Panc1 (cell line): ENCODE measurements at regions of chr19 and their contacts with region 1.

Region 1: GRCh38 chr19:39110263-39110967 is 15.2 kb upstream of the PAK4 start:
- DNase-seq: peak; percentile 75
- ATAC-seq: peak; percentile 83
- H3K4me3 ChIP-seq: no peak overlapping the region
- H3K27ac ChIP-seq: peak overlapping the region; percentile 24; the same call in 1 of the 2 replicates
- H3K4me1 ChIP-seq: peaks cover 16% of the 10 kb centered on the region
- H3K27me3 ChIP-seq: no peaks in the 10 kb centered on the region
- CTCF ChIP-seq: peak; percentile 100

Region 2: GRCh38 chr19:39021063-39021462 is 89.4 kb before region 1 on chr19:
- CTCF ChIA-PET with region 1: no interaction called
- POLR2A ChIA-PET with region 1: no interaction called
- in situ Hi-C with region 1: no loop called
- intact Hi-C with region 1: no loop called
- DNase-seq: no peak
- ATAC-seq: no peak
- H3K4me3 ChIP-seq: no peak overlapping the region
- H3K27ac ChIP-seq: no peak overlapping the region
- H3K4me1 ChIP-seq: no peaks in the 10 kb centered on the region
- H3K27me3 ChIP-seq: no peaks in the 10 kb centered on the region
- CTCF ChIP-seq: no peak

Region 3: DNA sequence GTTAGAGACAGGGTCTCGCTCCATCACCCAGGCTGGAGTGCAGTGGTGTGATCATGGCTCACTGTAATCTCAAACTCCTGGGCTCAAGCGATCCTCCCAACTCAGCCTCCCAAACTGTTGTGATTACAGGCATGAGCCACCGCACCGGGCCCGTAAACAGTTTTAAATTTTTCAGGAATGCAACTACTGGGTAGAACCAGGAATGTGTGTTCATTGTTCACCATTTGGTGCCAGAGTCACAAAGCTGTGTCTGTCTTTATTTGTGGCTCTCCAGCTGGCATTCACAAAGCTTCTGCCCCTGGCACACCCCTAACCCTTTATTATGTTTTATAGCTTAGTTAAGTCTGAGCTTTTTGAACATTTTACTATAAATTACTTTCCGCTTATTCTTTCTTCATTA is 46.0 kb before region 1 on chr19:
- CTCF ChIA-PET with region 1: no interaction called
- POLR2A ChIA-PET with region 1: no interaction called
- in situ Hi-C with region 1: loop called (anchors 10 kb)
- intact Hi-C with region 1: no loop called
- DNase-seq: no peak
- ATAC-seq: peak; percentile 6; the same call in 1 of the 2 replicates
- H3K4me3 ChIP-seq: no peak overlapping the region
- H3K27ac ChIP-seq: peak overlapping the region; percentile 40
- H3K4me1 ChIP-seq: peaks cover 10% of the 10 kb centered on the region
- H3K27me3 ChIP-seq: no peaks in the 10 kb centered on the region
- CTCF ChIP-seq: no peak

Region 4: GRCh38 chr19:39125554-39126311 is 15.3 kb after region 1 on chr19 and contains the start of gene PAK4:
- CTCF ChIA-PET with region 1: interaction called, 5 read pairs
- POLR2A ChIA-PET with region 1: interaction called, 10 read pairs
- in situ Hi-C with region 1: no loop called
- intact Hi-C with region 1: no loop called
- DNase-seq: peak; percentile 99
- ATAC-seq: peak; percentile 95
- H3K4me3 ChIP-seq: peak within 1 kb of the TSS; percentile 63 to 90
- H3K27ac ChIP-seq: peak within 1 kb of the TSS; percentile 89
- H3K4me1 ChIP-seq: peaks cover 46% of the 10 kb centered on the region
- H3K27me3 ChIP-seq: no peaks in the 10 kb centered on the region
- CTCF ChIP-seq: no peak
- total RNA-seq, gene PAK4: 311 TPM

Region 5: DNA sequence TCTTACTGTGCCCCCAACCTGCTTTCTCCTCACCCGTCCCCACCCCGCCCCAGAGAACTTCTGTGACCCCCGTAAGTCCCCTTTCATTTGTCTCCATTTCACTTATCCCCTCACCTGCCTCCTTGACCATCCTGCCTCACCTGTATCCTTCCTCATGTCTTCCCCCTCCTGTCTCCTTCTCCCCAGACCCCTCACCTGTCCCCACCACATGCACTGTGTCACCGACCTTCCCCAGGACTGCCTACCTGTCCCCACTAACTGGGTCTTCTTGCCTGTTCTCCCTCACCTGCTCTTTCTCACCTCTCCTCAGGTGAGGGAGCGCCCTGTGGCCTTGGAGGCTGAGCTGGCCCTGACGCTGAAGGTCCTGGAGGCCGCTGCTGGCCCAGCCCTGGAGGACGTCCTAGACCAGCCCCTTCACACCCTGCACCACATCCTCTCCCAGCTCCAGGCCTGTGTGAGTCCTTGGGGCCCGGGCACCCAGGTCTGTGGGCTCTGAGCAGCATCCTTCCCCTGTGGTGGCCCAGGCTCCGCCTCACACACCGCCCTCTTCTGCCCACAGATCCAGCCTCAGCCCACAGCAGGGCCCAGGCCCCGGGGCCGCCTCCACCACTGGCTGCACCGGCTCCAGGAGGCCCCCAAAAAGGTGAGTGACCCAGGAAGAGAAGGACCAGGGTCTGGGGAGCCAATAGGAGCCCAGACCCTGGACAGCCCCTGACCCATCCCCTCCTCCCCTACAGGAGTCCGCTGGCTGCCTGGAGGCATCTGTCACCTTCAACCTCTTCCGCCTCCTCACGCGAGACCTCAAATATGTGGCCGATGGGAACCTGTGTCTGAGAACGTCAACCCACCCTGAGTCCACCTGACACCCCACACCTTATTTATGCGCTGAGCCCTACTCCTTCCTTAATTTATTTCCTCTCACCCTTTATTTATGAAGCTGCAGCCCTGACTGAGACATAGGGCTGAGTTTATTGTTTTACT is 187.5 kb after region 1 on chr19:
- CTCF ChIA-PET with region 1: no interaction called
- POLR2A ChIA-PET with region 1: interaction called, 10 read pairs
- in situ Hi-C with region 1: no loop called
- intact Hi-C with region 1: no loop called
- DNase-seq: no peak
- ATAC-seq: peak; percentile 49
- H3K4me3 ChIP-seq: no peak overlapping the region
- H3K27ac ChIP-seq: no peak overlapping the region
- H3K4me1 ChIP-seq: no peaks in the 10 kb centered on the region; the same call in 1 of the 2 replicates
- H3K27me3 ChIP-seq: peaks cover 15% of the 10 kb centered on the region
- CTCF ChIP-seq: no peak